SK-N-SH (cell line): ENCODE measurements at regions of chr17 and their contacts with region 1.

Region 1: DNA sequence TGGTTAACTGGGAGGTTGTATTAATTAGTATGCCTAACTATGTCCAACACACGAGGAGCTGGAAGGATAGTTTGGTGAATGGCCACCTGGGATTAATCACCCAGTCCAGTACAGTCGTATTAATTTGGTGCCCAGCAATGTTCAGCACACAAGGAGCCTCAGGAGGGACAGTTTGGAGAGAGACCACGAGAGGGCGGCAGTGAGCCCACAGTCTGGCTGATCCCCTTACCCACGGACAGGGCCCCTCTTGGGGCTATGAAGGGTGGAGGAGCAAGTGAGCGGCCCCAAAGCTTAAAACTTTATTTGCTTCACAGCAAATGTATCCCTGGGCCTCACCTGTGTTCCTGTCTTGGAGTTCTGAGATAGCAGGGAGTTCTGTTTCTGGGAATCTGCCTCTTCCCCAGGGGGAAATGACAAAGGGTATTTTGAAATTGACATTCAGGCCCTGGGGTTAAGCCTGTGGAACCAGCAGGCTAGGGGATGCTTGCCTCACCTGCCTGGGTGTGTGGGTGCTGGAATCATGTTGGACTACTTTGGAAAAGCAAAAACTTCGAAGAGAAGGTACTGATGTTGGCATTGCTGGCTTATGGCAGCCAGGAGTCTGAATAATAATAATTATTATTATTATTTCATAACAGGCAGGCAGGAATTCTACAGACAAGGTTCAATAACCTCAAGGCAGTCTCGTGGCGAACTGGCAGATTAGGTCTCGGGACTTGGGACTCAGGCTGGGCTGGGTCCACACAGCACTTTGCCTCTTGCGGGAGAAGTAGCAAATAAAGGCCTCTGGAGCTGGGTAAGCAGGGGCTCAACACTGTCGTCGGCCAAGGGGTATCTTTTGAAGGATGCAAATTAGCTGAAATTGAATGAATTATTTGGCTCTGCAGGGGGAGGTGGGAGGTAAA is 227.6 kb upstream of the ASIC2 start:
- DNase-seq: peak; percentile 83
- H3K4me3 ChIP-seq: no peak overlapping the region
- H3K27ac ChIP-seq: no peak overlapping the region
- H3K4me1 ChIP-seq: peaks cover 0 to 5% of the 10 kb centered on the region in 2 experiments; a peak in 1 of 4 replicates
- H3K27me3 ChIP-seq: no peaks in the 10 kb centered on the region
- CTCF ChIP-seq: peak; percentile 89
- EP300 ChIP-seq: no peak
- RAD21 ChIP-seq: peak; percentile 61

Region 2: GRCh38 chr17:33288954-33289353 is 231.7 kb before region 1 on chr17:
- CTCF ChIA-PET with region 1: interaction called, 20 read pairs
- POLR2A ChIA-PET with region 1: no interaction called
- DNase-seq: no peak
- H3K4me3 ChIP-seq: no peak overlapping the region
- H3K27ac ChIP-seq: no peak overlapping the region
- H3K4me1 ChIP-seq: peaks cover 0 to 5% of the 10 kb centered on the region in 2 experiments; a peak in 2 of 4 replicates
- H3K27me3 ChIP-seq: peaks cover 17% of the 10 kb centered on the region
- CTCF ChIP-seq: no peak
- EP300 ChIP-seq: no peak
- RAD21 ChIP-seq: no peak

Region 3: DNA sequence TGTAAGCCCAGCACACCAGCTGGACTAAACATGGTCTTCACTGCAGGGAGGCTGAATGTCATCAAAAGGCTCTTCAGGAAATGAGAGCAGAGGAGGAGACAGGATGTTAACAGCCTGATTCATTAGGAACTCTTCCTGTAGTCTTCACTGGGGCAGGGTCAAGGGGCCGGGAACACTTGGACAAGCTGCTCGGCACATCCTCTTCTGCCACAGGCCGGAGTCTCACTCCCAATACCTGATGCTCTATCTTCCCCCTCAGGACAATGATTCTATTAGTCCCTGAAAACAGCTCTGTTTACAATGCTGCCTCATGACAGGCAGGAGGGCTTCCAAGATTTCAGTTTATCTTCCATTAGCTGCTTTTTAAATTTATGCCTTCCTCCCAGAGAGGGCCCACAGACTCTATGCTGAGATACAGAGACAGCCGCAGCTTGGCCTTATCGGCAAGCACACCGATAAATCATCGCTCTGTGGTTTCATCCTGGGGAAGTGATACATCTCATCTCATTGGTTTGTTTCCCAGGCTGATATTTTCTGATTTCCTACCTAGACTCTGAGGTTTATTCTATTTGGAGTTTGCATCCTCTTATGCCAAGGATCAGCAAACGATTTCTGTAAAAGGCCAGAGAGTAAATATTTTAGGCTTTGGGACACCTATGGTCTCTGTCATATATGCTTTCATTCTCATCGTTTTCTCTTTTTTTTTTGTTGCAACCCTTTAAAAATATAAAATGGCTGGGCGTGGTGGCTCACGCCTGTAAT is 13.6 kb before region 1 on chr17:
- CTCF ChIA-PET with region 1: interaction called, 31 read pairs
- POLR2A ChIA-PET with region 1: no interaction called
- DNase-seq: peak; percentile 44
- H3K4me3 ChIP-seq: no peak overlapping the region
- H3K27ac ChIP-seq: peak overlapping the region; percentile 60 to 73
- H3K4me1 ChIP-seq: peaks cover 0 to 42% of the 10 kb centered on the region in 2 experiments; a peak in 2 of 4 replicates
- H3K27me3 ChIP-seq: no peaks in the 10 kb centered on the region
- CTCF ChIP-seq: no peak
- EP300 ChIP-seq: peak; percentile 27 to 68; a peak in 2 of 4 replicates
- RAD21 ChIP-seq: no peak

Region 4: GRCh38 chr17:33531311-33531710 is 10.6 kb after region 1 on chr17:
- CTCF ChIA-PET with region 1: interaction called, 30 read pairs
- POLR2A ChIA-PET with region 1: no interaction called
- DNase-seq: no peak
- H3K4me3 ChIP-seq: no peak overlapping the region
- H3K27ac ChIP-seq: no peak overlapping the region
- H3K4me1 ChIP-seq: no peaks in the 10 kb centered on the region
- H3K27me3 ChIP-seq: no peaks in the 10 kb centered on the region
- CTCF ChIP-seq: no peak
- EP300 ChIP-seq: no peak
- RAD21 ChIP-seq: no peak

Region 5: GRCh38 chr17:33674685-33675084 is 154.0 kb after region 1 on chr17:
- CTCF ChIA-PET with region 1: interaction called, 37 read pairs
- POLR2A ChIA-PET with region 1: no interaction called
- DNase-seq: peak; percentile 62
- H3K4me3 ChIP-seq: no peak overlapping the region; a peak in 1 of 4 replicates
- H3K27ac ChIP-seq: no peak overlapping the region
- H3K4me1 ChIP-seq: no peaks in the 10 kb centered on the region
- H3K27me3 ChIP-seq: no peaks in the 10 kb centered on the region
- CTCF ChIP-seq: peak; percentile 80
- EP300 ChIP-seq: no peak
- RAD21 ChIP-seq: peak; percentile 72